Head of caudate nucleus (tissue), 42 donors: ENCODE measurements at regions of chr13 and their contacts with region 1.

Region 1: DNA sequence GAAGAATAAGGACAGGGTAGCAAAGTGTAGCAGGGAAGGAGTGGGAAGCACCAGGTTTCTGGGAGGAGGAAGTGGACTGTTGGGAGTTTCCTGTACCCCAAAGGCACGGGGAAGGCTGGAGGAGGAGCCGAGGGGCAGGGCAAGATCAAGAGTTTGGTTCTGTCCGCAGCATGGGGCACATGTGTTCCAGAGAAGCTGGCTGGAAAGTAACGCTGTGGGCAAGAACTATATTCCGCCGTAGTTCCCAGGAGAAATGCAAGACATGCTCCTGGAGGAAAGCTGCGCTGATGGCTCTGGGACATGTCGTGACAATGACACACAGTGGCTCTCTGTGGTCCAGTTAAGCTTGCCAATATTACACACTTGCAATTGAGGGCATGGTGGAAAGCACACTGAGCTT is 51.7 kb upstream of the KPNA3 start:
- DNase-seq: no peak

Region 2: GRCh38 chr13:49669735-49670309 is 174.4 kb before region 1 on chr13:
- intact Hi-C with region 1: loop called (anchors 2 kb)
- DNase-seq: peak; percentile 34 to 87 (median 68)